ENCODE measurements at regions of chr14 and their contacts with region 1.

Region 1: DNA sequence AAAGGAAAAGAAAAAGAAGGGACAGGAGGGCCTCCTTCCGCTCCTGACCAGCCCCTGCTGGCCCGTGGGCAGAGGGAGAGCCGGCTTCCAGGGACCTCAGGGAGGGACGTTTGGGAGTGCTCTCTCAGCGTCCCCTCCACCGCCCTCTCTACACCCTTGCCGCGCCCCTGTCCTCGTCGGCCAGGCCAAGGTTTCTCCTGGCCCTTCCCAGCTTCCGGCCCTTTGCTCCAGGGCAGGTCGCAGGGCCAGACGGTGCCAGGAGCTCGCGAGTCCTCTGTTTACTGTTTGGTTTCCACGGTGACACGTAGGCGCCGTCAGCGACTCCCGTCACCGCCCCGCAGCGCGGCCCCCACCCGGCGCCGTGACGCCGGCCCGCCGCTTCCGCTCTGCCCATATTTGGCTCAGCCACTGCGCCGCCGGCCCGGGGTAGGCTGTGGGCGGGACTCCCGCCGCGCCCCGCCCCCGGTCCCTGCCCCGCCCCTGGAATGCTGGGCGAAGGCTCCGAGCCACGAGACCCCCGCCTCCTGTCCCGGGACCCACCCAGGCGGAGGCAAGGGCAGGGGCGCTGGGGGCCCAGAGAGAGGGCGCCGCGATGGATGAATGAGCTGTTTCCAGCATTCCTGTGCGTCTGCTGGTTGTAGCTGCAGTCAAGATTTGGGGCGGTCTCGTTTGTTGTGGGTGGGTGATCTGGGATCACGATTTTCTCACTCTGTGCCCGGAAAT is 15.5 kb downstream of the FOS start:
- DNase-seq: peak; percentile 96 to 97
- ATAC-seq: peak; percentile 91 to 97 (median 94)
- H3K4me3 ChIP-seq: peak overlapping the region; percentile 26 to 80 (median 67)
- H3K27ac ChIP-seq: peak overlapping the region; percentile 82 to 99 (median 94)
- H3K4me1 ChIP-seq: peaks cover 5 to 53% (median 26%) of the 10 kb centered on the region in 9 donors
- H3K27me3 ChIP-seq: no peaks in the 10 kb centered on the region
- CTCF ChIP-seq: peak in 2 of 9 donors; percentile 25 to 28

Region 2: GRCh38 chr14:74932401-74932901 is 361.6 kb before region 1 on chr14:
- intact Hi-C with region 1: loop called in 1 of 10 experiments (anchors 10 kb)
- DNase-seq: no peak
- ATAC-seq: peak; percentile 33 to 74 (median 70)
- H3K4me3 ChIP-seq: no peak overlapping the region
- H3K27ac ChIP-seq: peak overlapping the region in 9 of 10 donors; percentile 33 to 80 (median 55)
- H3K4me1 ChIP-seq: peaks cover 9 to 48% (median 40%) of the 10 kb centered on the region in 9 donors
- H3K27me3 ChIP-seq: no peaks in the 10 kb centered on the region
- CTCF ChIP-seq: no peak

Region 3: DNA sequence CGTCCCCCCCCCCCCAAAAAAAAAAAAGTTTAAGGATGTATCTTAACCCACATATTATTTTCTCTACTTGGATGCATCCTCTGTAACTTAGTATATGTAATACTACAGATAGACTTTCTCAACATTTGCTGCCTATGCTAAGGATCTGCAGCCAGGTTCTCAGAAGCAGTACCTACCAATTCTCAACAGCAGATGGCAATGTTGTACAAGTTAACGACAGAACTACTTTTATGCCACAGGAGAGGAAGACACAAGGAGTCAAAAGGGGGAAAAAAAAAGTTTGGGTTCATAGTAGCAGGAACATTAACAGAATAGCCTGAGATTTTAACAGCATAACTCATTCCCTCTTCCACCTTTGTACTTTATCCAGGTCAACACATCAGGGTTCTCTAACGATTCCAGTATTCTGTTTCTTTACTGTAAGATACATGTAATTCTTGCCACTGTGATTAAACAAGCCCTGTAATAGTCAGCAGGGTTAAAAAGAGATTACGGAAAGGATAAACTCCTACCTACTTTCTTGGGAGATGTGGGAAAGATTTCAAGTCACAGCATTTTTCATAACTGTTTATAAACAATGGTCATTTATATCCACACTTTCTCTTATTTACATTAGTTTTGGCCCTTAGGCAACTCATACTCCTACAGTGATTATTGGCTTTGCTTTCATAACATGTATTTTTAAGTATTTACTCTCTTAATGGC is 161.5 kb before region 1 on chr14:
- intact Hi-C with region 1: loop called in 7 of 10 experiments (anchors 2 to 5 kb)
- DNase-seq: peak in 1 of 2 donors; percentile 73
- ATAC-seq: peak; percentile 50 to 83 (median 76)
- H3K4me3 ChIP-seq: no peak overlapping the region
- H3K27ac ChIP-seq: peak overlapping the region in 4 of 10 donors; percentile 6 to 67 (median 26)
- H3K4me1 ChIP-seq: peaks cover 0 to 22% (median 15%) of the 10 kb centered on the region in 9 donors
- H3K27me3 ChIP-seq: no peaks in the 10 kb centered on the region
- CTCF ChIP-seq: peak; percentile 58 to 82 (median 74)

Region 4: GRCh38 chr14:75230140-75231045 is 63.7 kb before region 1 on chr14:
- intact Hi-C with region 1: loop called in 5 of 10 experiments (anchors 5 to 10 kb)
- DNase-seq: peak in 1 of 2 donors; percentile 83
- ATAC-seq: peak in 5 of 8 donors; percentile 46 to 80 (median 60)
- H3K4me3 ChIP-seq: no peak overlapping the region
- H3K27ac ChIP-seq: peak overlapping the region in 6 of 10 donors; percentile 21 to 60 (median 43)
- H3K4me1 ChIP-seq: peaks cover 0 to 53% (median 9%) of the 10 kb centered on the region in 9 donors
- H3K27me3 ChIP-seq: no peaks in the 10 kb centered on the region
- CTCF ChIP-seq: peak in 4 of 9 donors; percentile 14 to 22 (median 20)

Region 5: GRCh38 chr14:75258615-75259466 is 35.2 kb before region 1 on chr14:
- intact Hi-C with region 1: loop called in 3 of 10 experiments (anchors 1 to 2 kb)
- DNase-seq: peak; percentile 99 to 100
- ATAC-seq: peak; percentile 95 to 98 (median 97)
- H3K4me3 ChIP-seq: peak overlapping the region in 9 of 10 donors; percentile 20 to 55 (median 47)
- H3K27ac ChIP-seq: peak overlapping the region; percentile 79 to 98 (median 95)
- H3K4me1 ChIP-seq: peaks cover 6 to 43% (median 33%) of the 10 kb centered on the region in 9 donors
- H3K27me3 ChIP-seq: no peaks in the 10 kb centered on the region
- CTCF ChIP-seq: no peak

Region 6: GRCh38 chr14:75278422-75279161 is 15.5 kb before region 1 on chr14 and contains the start of gene FOS:
- intact Hi-C with region 1: loop called in 4 of 10 experiments (anchors 1 to 2 kb)
- DNase-seq: peak; percentile 87 to 96
- ATAC-seq: peak; percentile 73 to 88 (median 83)
- H3K4me3 ChIP-seq: peak within 1 kb of the TSS; percentile 70 to 91 (median 82)
- H3K27ac ChIP-seq: peak within 1 kb of the TSS; percentile 97 to 100 (median 100)
- H3K4me1 ChIP-seq: peaks cover 3 to 76% (median 38%) of the 10 kb centered on the region in 9 donors
- H3K27me3 ChIP-seq: no peaks in the 10 kb centered on the region
- CTCF ChIP-seq: no peak
- total RNA-seq, gene FOS: 9.3 to 173 (median 64.0) TPM

Measured in heart right ventricle (tissue), 16 donors.